ENCODE measurements at regions of chr4 and their contacts with region 1.

Region 1: GRCh38 chr4:70151271-70151670 is 2.8 kb upstream of the PRR27 start:
- DNase-seq: no peak
- H3K4me3 Mint-ChIP-seq: no peak overlapping the region
- H3K27ac Mint-ChIP-seq: no peak overlapping the region
- H3K4me1 Mint-ChIP-seq: no peaks in the 10 kb centered on the region
- H3K27me3 Mint-ChIP-seq: no peaks in the 10 kb centered on the region
- CTCF ChIP-seq: no peak

Region 2: GRCh38 chr4:69656653-69657158 is 494.6 kb before region 1 on chr4:
- CTCF ChIA-PET with region 1: no interaction called
- intact Hi-C with region 1: no loop called
- DNase-seq: no peak
- H3K4me3 Mint-ChIP-seq: no peak overlapping the region
- H3K27ac Mint-ChIP-seq: no peak overlapping the region
- H3K4me1 Mint-ChIP-seq: no peaks in the 10 kb centered on the region
- H3K27me3 Mint-ChIP-seq: no peaks in the 10 kb centered on the region
- CTCF ChIP-seq: no peak

Region 3: GRCh38 chr4:69920874-69921273 is 230.4 kb before region 1 on chr4:
- CTCF ChIA-PET with region 1: no interaction called
- intact Hi-C with region 1: no loop called
- DNase-seq: no peak
- H3K4me3 Mint-ChIP-seq: no peak overlapping the region
- H3K27ac Mint-ChIP-seq: no peak overlapping the region
- H3K4me1 Mint-ChIP-seq: no peaks in the 10 kb centered on the region
- H3K27me3 Mint-ChIP-seq: no peaks in the 10 kb centered on the region
- CTCF ChIP-seq: no peak

Region 4: GRCh38 chr4:70138751-70139150 is 12.5 kb before region 1 on chr4:
- CTCF ChIA-PET with region 1: no interaction called
- intact Hi-C with region 1: loop called (anchors 1 kb)
- DNase-seq: no peak
- H3K4me3 Mint-ChIP-seq: no peak overlapping the region
- H3K27ac Mint-ChIP-seq: no peak overlapping the region
- H3K4me1 Mint-ChIP-seq: no peaks in the 10 kb centered on the region
- H3K27me3 Mint-ChIP-seq: no peaks in the 10 kb centered on the region
- CTCF ChIP-seq: no peak

Region 5: DNA sequence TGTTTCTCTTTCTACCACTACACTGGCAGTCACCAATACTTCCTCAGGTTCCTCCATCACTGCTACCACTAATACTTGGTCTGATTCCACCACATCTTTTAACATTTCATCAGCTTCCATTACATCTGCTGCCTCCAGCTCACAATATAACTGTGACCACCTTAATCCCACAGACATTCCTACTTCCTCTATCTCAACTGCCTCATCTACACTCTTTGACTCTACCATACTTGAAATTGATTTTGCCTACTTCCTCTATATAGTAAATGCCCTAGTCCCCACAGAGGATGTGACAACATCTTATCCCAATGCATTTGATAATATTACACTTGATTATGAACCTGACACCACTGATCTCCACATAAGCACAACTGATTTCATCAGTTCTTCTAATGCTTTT is 275.5 kb after region 1 on chr4:
- CTCF ChIA-PET with region 1: no interaction called
- intact Hi-C with region 1: no loop called
- DNase-seq: no peak
- H3K4me3 Mint-ChIP-seq: no peak overlapping the region
- H3K27ac Mint-ChIP-seq: no peak overlapping the region
- H3K4me1 Mint-ChIP-seq: no peaks in the 10 kb centered on the region
- H3K27me3 Mint-ChIP-seq: no peaks in the 10 kb centered on the region
- CTCF ChIP-seq: no peak

Measured in Calu3 (cell line).